Naive thymus-derived CD4-positive, alpha-beta T cell (primary cell): ENCODE measurements at regions of chr5 and their contacts with region 1.

Region 1: GRCh38 chr5:169583424-169584204 is at the start of gene SPDL1:
- DNase-seq: peak; percentile 86 to 95 (median 93)
- ATAC-seq: peak; percentile 97
- H3K4me3 ChIP-seq: peak within 1 kb of the TSS; percentile 93
- H3K4me3 Mint-ChIP-seq: peak within 1 kb of the TSS; percentile 93 to 99 (median 98)
- H3K27ac ChIP-seq: peak within 1 kb of the TSS; percentile 83
- H3K27ac Mint-ChIP-seq: peak within 1 kb of the TSS; percentile 86 to 97 (median 91)
- H3K4me1 ChIP-seq: peaks cover 6% of the 10 kb centered on the region in 2 donors
- H3K4me1 Mint-ChIP-seq: peaks cover 9 to 47% (median 40%) of the 10 kb centered on the region in 7 donors
- H3K27me3 ChIP-seq: no peaks in the 10 kb centered on the region
- H3K27me3 Mint-ChIP-seq: peaks cover 0 to 15% (median 0%) of the 10 kb centered on the region in 5 donors
- total RNA-seq, gene SPDL1: 9.9 to 27.2 (median 13.6) TPM

Region 2: GRCh38 chr5:168227973-168228615 is 1355.5 kb before region 1 on chr5:
- CTCF ChIA-PET with region 1: no interaction called
- POLR2A ChIA-PET with region 1: no interaction called
- intact Hi-C with region 1: loop called in 1 of 2 experiments (anchors 1 kb)
- DNase-seq: peak in 5 of 9 donors; percentile 26 to 51 (median 45)
- ATAC-seq: peak; percentile 97
- H3K4me3 ChIP-seq: no peak overlapping the region
- H3K4me3 Mint-ChIP-seq: peak overlapping the region in 7 of 10 donors; percentile 17 to 68 (median 58)
- H3K27ac ChIP-seq: peak overlapping the region; percentile 46
- H3K27ac Mint-ChIP-seq: peak overlapping the region in 4 of 9 donors; percentile 3 to 75 (median 62)
- H3K4me1 ChIP-seq: peaks cover 0 to 3% of the 10 kb centered on the region in 2 donors
- H3K4me1 Mint-ChIP-seq: peaks cover 0 to 31% (median 23%) of the 10 kb centered on the region in 7 donors
- H3K27me3 ChIP-seq: no peaks in the 10 kb centered on the region
- H3K27me3 Mint-ChIP-seq: peaks cover 0 to 19% (median 10%) of the 10 kb centered on the region in 5 donors

Region 3: GRCh38 chr5:168579488-168580226 is 1004.0 kb before region 1 on chr5:
- CTCF ChIA-PET with region 1: no interaction called
- POLR2A ChIA-PET with region 1: no interaction called
- intact Hi-C with region 1: loop called (anchors 1 kb)
- DNase-seq: peak; percentile 90 to 96 (median 95)
- ATAC-seq: peak; percentile 98
- H3K4me3 ChIP-seq: peak overlapping the region; percentile 79
- H3K4me3 Mint-ChIP-seq: peak overlapping the region; percentile 88 to 100 (median 94)
- H3K27ac ChIP-seq: peak overlapping the region; percentile 83
- H3K27ac Mint-ChIP-seq: peak overlapping the region; percentile 87 to 100 (median 97)
- H3K4me1 ChIP-seq: peaks cover 0 to 16% of the 10 kb centered on the region in 2 donors
- H3K4me1 Mint-ChIP-seq: peaks cover 19 to 48% (median 44%) of the 10 kb centered on the region in 7 donors
- H3K27me3 ChIP-seq: no peaks in the 10 kb centered on the region
- H3K27me3 Mint-ChIP-seq: peaks cover 0 to 4% (median 0%) of the 10 kb centered on the region in 5 donors

Region 4: DNA sequence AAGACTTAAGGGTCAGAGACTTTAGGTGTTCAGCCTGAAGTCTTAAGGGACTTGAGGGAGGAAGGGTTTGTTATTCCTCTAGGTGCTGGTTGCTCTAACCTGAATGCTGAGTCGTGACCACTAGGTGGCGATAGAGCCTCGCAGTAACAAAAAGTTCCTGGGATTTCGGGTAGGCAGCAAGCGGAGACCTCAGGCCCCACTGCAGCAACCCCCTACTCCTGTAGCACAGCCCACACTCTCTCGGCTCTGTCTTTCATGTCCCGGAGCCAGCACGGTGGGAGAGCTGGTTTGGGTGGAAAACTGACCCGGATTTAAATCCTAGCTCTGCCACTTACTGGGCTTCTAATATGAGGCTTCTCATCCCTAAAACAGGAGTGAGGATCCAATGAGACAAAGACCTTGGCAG is 904.1 kb before region 1 on chr5:
- CTCF ChIA-PET with region 1: interaction called, 12 read pairs
- POLR2A ChIA-PET with region 1: interaction called, 3 read pairs
- intact Hi-C with region 1: loop called (anchors 1 kb)
- DNase-seq: peak; percentile 11 to 59 (median 47)
- ATAC-seq: peak; percentile 55
- H3K4me3 ChIP-seq: no peak overlapping the region
- H3K4me3 Mint-ChIP-seq: no peak overlapping the region
- H3K27ac ChIP-seq: no peak overlapping the region
- H3K27ac Mint-ChIP-seq: no peak overlapping the region
- H3K4me1 ChIP-seq: peaks cover 0 to 5% of the 10 kb centered on the region in 2 donors
- H3K4me1 Mint-ChIP-seq: peaks cover 6 to 20% (median 14%) of the 10 kb centered on the region in 7 donors
- H3K27me3 ChIP-seq: no peaks in the 10 kb centered on the region
- H3K27me3 Mint-ChIP-seq: peaks cover 0 to 6% (median 0%) of the 10 kb centered on the region in 5 donors

Region 5: DNA sequence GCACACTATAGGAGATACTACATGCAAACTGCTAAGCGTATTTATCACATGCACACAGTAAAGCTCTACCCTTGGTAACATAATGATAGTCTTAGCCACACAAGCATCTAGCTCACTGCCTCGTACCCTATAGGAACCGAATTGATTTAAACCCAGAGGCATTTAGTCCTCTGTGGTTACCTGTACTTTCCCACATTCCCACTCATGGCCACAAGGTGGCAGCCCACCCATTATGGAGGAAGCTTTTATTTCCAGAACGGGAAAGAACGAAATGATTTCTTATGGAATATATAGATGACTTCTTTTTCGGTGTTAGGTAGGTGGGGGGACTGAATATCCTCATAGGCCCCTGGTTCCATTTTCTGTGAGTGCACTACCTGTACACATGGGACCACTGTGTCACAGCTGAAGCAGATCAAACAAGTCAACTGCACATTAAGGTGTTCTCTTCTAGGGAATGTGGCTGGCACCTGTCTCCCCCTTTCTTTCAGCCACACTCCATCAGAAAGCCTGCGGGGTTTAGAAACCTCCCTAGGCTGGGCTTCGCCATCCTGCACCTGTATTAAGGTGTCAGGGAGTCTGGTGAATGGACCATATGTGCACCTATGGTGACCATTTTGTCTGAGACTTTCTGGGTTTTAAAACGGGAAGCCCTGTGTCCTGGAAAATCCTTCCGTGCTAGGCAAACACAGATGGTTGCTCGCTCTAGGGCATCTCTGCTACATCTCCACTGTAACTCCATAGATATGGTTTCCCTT is 595.9 kb before region 1 on chr5:
- CTCF ChIA-PET with region 1: interaction called, 18 read pairs
- POLR2A ChIA-PET with region 1: no interaction called
- intact Hi-C with region 1: no loop called
- DNase-seq: peak in 7 of 9 donors; percentile 8 to 54 (median 13)
- ATAC-seq: no peak
- H3K4me3 ChIP-seq: no peak overlapping the region
- H3K4me3 Mint-ChIP-seq: no peak overlapping the region
- H3K27ac ChIP-seq: no peak overlapping the region
- H3K27ac Mint-ChIP-seq: no peak overlapping the region
- H3K4me1 ChIP-seq: peaks cover 0 to 4% of the 10 kb centered on the region in 2 donors
- H3K4me1 Mint-ChIP-seq: no peaks in the 10 kb centered on the region
- H3K27me3 ChIP-seq: peaks cover 0 to 3% of the 10 kb centered on the region in 2 donors
- H3K27me3 Mint-ChIP-seq: peaks cover 3 to 23% (median 16%) of the 10 kb centered on the region in 5 donors

Region 6: GRCh38 chr5:169670769-169671525 is 87.3 kb after region 1 on chr5:
- CTCF ChIA-PET with region 1: no interaction called
- POLR2A ChIA-PET with region 1: no interaction called
- intact Hi-C with region 1: loop called in 1 of 2 experiments (anchors 1 kb)
- DNase-seq: no peak
- ATAC-seq: no peak
- H3K4me3 ChIP-seq: no peak overlapping the region
- H3K4me3 Mint-ChIP-seq: peak overlapping the region in 1 of 10 donors; percentile 5
- H3K27ac ChIP-seq: no peak overlapping the region
- H3K27ac Mint-ChIP-seq: peak overlapping the region in 2 of 9 donors; percentile 48 to 81
- H3K4me1 ChIP-seq: no peaks in the 10 kb centered on the region
- H3K4me1 Mint-ChIP-seq: peaks cover 4 to 32% (median 8%) of the 10 kb centered on the region in 7 donors
- H3K27me3 ChIP-seq: no peaks in the 10 kb centered on the region
- H3K27me3 Mint-ChIP-seq: no peaks in the 10 kb centered on the region

Region 7: GRCh38 chr5:170333161-170333910 is 749.7 kb after region 1 on chr5:
- CTCF ChIA-PET with region 1: no interaction called
- POLR2A ChIA-PET with region 1: no interaction called
- intact Hi-C with region 1: loop called in 1 of 2 experiments (anchors 2 kb)
- DNase-seq: peak in 6 of 9 donors; percentile 36 to 61 (median 50)
- ATAC-seq: peak; percentile 36
- H3K4me3 ChIP-seq: peak overlapping the region; percentile 40
- H3K4me3 Mint-ChIP-seq: peak overlapping the region in 4 of 10 donors; percentile 77 to 82 (median 81)
- H3K27ac ChIP-seq: peak overlapping the region; percentile 87
- H3K27ac Mint-ChIP-seq: no peak overlapping the region
- H3K4me1 ChIP-seq: peaks cover 79 to 87% of the 10 kb centered on the region in 2 donors
- H3K4me1 Mint-ChIP-seq: peaks cover 0 to 65% (median 30%) of the 10 kb centered on the region in 7 donors
- H3K27me3 ChIP-seq: no peaks in the 10 kb centered on the region
- H3K27me3 Mint-ChIP-seq: peaks cover 0 to 3% (median 0%) of the 10 kb centered on the region in 5 donors